ENCODE measurements at regions of chr4 and their contacts with region 1.

Region 1: GRCh38 chr4:118981839-118982381 is 93.3 kb downstream of the SYNPO2 start:
- DNase-seq: peak; percentile 91
- H3K4me3 ChIP-seq: no peak overlapping the region
- H3K27ac ChIP-seq: no peak overlapping the region
- H3K27me3 ChIP-seq: no peaks in the 10 kb centered on the region
- CTCF ChIP-seq: peak; percentile 78

Region 2: GRCh38 chr4:118712872-118713271 is 269.0 kb before region 1 on chr4:
- CTCF ChIA-PET with region 1: no interaction called
- POLR2A ChIA-PET with region 1: no interaction called
- DNase-seq: no peak
- H3K4me3 ChIP-seq: no peak overlapping the region
- H3K27ac ChIP-seq: no peak overlapping the region
- H3K27me3 ChIP-seq: no peaks in the 10 kb centered on the region
- CTCF ChIP-seq: no peak

Region 3: DNA sequence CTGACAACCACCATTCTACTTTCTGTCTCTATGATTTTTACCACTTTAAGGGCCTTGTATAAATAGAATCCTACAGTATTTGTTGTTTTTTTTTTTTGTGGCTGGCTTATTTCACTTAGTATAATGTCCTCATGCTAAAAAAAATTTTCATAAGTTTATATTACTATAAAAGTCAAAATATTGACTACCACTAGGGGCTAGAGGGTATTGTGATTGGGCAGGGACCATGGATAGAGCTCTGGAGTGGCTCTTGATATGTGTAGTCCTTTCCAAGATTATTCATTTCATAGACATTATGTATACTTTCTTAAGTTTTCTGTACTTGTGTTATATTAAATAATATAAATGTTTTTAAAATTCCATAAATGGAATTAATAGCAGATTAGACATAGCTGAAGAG is 188.3 kb after region 1 on chr4:
- CTCF ChIA-PET with region 1: no interaction called
- POLR2A ChIA-PET with region 1: no interaction called
- DNase-seq: no peak
- H3K4me3 ChIP-seq: no peak overlapping the region
- H3K27ac ChIP-seq: no peak overlapping the region
- H3K27me3 ChIP-seq: no peaks in the 10 kb centered on the region
- CTCF ChIP-seq: 0 out of 2 replicates have a peak, but pooled peaks have one; percentile 4

Region 4: GRCh38 chr4:119300101-119300978 is 318.4 kb after region 1 on chr4:
- CTCF ChIA-PET with region 1: interaction called, 14 read pairs
- POLR2A ChIA-PET with region 1: no interaction called
- DNase-seq: peak; percentile 78
- H3K4me3 ChIP-seq: peak overlapping the region; percentile 93
- H3K27ac ChIP-seq: peak overlapping the region; percentile 95
- H3K27me3 ChIP-seq: no peaks in the 10 kb centered on the region
- CTCF ChIP-seq: peak; percentile 22

Region 5: GRCh38 chr4:119490335-119490734 is 508.4 kb after region 1 on chr4:
- CTCF ChIA-PET with region 1: interaction called, 10 read pairs
- POLR2A ChIA-PET with region 1: no interaction called
- DNase-seq: no peak
- H3K4me3 ChIP-seq: no peak overlapping the region
- H3K27ac ChIP-seq: no peak overlapping the region
- H3K27me3 ChIP-seq: no peaks in the 10 kb centered on the region
- CTCF ChIP-seq: peak; percentile 45

Measured in AG04450 (cell line).